Activated CD4-positive, alpha-beta T cell treated with anti-CD3 and anti-CD28 coated beads, Interleukin-2, amount 10 ng/mL, durations not matched to agents 7 days and 5 days (primary cell): ENCODE measurements at regions of chr19 and their contacts with region 1.

Region 1: GRCh38 chr19:49570138-49570856 is 10.1 kb downstream of the NOSIP start:
- DNase-seq: peak; percentile 88
- H3K4me3 Mint-ChIP-seq: peak overlapping the region; percentile 51
- H3K27ac Mint-ChIP-seq: peak overlapping the region; percentile 98
- H3K4me1 Mint-ChIP-seq: peaks cover 70% of the 10 kb centered on the region
- H3K27me3 Mint-ChIP-seq: no peaks in the 10 kb centered on the region

Region 2: DNA sequence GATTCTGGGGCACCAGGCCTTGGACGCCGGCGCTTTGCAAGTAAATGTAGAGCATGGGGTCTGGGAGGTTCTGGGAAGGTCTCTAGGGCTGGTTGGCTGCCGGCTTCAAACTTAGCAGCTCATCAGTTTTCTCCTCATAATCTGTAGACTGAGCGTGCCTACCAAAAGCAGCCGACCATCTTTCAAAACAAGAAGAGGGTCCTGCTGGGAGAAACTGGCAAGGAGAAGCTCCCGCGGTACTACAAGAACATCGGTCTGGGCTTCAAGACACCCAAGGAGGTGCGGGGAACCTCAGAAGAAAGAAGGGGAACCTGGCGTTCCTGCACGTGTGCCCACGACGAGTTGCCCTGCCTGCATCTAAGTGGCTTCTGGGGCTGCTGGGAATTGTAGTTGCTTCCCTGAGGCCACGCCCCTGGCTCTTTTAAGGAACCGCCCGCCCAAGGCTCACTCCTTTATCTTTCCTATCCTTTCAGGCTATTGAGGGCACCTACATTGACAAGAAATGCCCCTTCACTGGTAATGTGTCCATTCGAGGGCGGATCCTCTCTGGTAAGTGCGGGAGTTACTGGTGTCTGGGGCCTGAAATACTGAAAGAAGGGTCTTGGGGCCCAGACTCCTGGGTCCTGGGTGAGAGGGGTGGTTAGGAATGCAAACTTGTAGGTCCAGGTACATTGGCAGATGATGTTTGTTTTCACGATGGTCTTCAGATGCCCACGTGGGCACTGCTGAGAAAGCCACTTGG is 73.1 kb before region 1 on chr19:
- CTCF ChIA-PET with region 1: interaction called, 15 read pairs
- POLR2A ChIA-PET with region 1: interaction called, 3 read pairs
- DNase-seq: peak; percentile 89
- H3K4me3 Mint-ChIP-seq: peak overlapping the region; percentile 100
- H3K27ac Mint-ChIP-seq: peak overlapping the region; percentile 99
- H3K4me1 Mint-ChIP-seq: peaks cover 52% of the 10 kb centered on the region
- H3K27me3 Mint-ChIP-seq: no peaks in the 10 kb centered on the region

Region 3: DNA sequence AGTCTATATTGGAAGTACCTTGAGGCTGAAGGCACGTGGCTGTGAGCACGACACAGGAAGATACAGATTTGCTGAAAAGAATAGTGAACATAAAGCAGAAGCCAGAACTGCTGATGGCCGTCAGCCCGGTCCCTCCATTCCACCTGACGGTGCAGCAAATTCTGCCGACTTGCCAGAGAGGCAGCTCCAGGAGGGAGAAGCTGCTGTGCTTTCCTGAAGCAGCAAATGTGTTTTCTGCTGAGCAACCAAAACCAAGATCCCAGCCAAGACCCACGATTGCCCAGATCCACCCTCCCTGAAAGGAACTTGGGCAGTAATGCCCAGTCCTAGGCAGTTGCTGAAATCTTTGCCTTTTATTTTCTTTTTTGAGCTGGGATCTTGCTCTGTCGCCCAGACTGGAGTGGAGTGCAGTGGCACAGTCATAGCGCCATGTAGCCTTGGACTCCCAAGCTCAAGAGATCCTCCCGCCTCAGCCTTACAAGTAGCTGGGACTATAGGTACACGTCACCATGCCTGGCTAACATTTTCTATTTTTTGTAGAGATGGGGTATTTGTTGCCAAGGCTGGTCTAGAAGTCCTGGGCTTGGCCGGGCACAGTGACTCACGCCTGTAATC is 49.5 kb before region 1 on chr19:
- CTCF ChIA-PET with region 1: interaction called, 12 read pairs
- POLR2A ChIA-PET with region 1: no interaction called
- DNase-seq: no peak
- H3K4me3 Mint-ChIP-seq: no peak overlapping the region
- H3K27ac Mint-ChIP-seq: no peak overlapping the region
- H3K4me1 Mint-ChIP-seq: peaks cover 14% of the 10 kb centered on the region
- H3K27me3 Mint-ChIP-seq: no peaks in the 10 kb centered on the region

Region 4: GRCh38 chr19:49555600-49556411 is 14.5 kb before region 1 on chr19:
- CTCF ChIA-PET with region 1: interaction called, 95 read pairs
- POLR2A ChIA-PET with region 1: interaction called, 11 read pairs
- DNase-seq: peak; percentile 89
- H3K4me3 Mint-ChIP-seq: peak overlapping the region; percentile 64
- H3K27ac Mint-ChIP-seq: peak overlapping the region; percentile 96
- H3K4me1 Mint-ChIP-seq: peaks cover 80% of the 10 kb centered on the region
- H3K27me3 Mint-ChIP-seq: no peaks in the 10 kb centered on the region

Region 5: DNA sequence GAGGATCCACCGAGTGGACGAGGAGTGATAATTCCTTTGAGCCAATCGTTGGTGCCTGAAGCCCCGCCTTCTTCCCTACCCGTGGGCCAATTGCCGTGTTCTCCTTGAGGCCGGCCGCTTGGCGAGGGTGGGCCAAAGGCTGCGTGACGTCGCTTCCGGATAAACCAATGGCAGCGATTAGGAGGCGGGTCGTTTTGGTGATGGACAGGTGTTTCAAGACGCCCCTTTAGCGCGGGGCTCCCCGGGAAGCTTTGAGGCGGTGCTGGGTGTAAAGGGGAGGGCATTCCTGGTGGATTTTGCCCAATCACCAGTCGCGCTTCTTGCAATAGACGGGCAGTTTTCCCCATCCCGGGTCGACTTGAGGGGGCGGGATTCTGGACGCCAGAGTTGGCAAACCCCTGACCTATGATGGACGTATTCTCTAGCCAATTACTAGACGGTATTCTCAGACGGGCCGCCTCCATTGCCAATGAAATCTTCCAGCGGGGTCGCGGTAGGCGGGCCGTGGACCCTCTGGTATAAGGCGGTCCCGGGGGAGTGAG is 106.5 kb after region 1 on chr19:
- CTCF ChIA-PET with region 1: interaction called, 17 read pairs
- POLR2A ChIA-PET with region 1: no interaction called
- DNase-seq: peak; percentile 100
- H3K4me3 Mint-ChIP-seq: peak overlapping the region; percentile 89
- H3K27ac Mint-ChIP-seq: peak overlapping the region; percentile 99
- H3K4me1 Mint-ChIP-seq: peaks cover 36% of the 10 kb centered on the region
- H3K27me3 Mint-ChIP-seq: no peaks in the 10 kb centered on the region

Region 6: GRCh38 chr19:49690656-49691242 is 120.5 kb after region 1 on chr19 and contains the start of gene CPT1C:
- CTCF ChIA-PET with region 1: no interaction called
- POLR2A ChIA-PET with region 1: no interaction called
- DNase-seq: peak; percentile 54
- H3K4me3 Mint-ChIP-seq: peak within 1 kb of the TSS; percentile 77
- H3K27ac Mint-ChIP-seq: peak within 1 kb of the TSS; percentile 68
- H3K4me1 Mint-ChIP-seq: peaks cover 27% of the 10 kb centered on the region
- H3K27me3 Mint-ChIP-seq: peaks cover 24% of the 10 kb centered on the region
- total RNA-seq, gene CPT1C: 0.79 to 1.3 TPM

Region 7: DNA sequence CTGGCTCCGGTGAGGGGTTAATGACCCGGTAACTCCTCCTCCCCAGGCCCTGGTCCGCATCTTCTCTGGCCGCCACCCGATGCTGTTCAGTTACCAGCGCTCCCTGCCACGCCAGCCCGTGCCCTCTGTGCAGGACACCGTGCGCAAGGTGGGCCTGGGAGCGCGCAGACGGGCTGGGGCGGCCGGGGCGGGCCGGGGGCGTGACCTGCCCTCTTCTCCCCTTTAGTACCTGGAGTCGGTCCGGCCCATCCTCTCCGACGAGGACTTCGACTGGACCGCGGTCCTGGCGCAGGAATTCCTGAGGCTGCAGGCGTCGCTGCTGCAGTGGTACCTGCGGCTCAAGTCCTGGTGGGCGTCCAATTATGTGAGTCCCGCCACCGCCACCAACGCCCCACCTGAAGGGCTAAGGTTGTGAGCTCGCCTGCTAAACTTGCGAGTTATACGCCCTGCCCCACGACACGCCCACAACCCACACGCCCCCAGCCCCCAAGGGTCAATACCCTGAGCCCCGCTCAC is 131.0 kb after region 1 on chr19:
- CTCF ChIA-PET with region 1: no interaction called
- POLR2A ChIA-PET with region 1: no interaction called
- DNase-seq: no peak
- H3K4me3 Mint-ChIP-seq: no peak overlapping the region
- H3K27ac Mint-ChIP-seq: no peak overlapping the region
- H3K4me1 Mint-ChIP-seq: no peaks in the 10 kb centered on the region
- H3K27me3 Mint-ChIP-seq: peaks cover 11% of the 10 kb centered on the region

Region 8: GRCh38 chr19:49712397-49712859 is 142.1 kb after region 1 on chr19:
- CTCF ChIA-PET with region 1: no interaction called
- POLR2A ChIA-PET with region 1: no interaction called
- DNase-seq: no peak
- H3K4me3 Mint-ChIP-seq: no peak overlapping the region
- H3K27ac Mint-ChIP-seq: no peak overlapping the region
- H3K4me1 Mint-ChIP-seq: peaks cover 9% of the 10 kb centered on the region
- H3K27me3 Mint-ChIP-seq: no peaks in the 10 kb centered on the region